HepG2 (cell line): ENCODE measurements at regions of chr2 and their contacts with region 1.

Region 1: DNA sequence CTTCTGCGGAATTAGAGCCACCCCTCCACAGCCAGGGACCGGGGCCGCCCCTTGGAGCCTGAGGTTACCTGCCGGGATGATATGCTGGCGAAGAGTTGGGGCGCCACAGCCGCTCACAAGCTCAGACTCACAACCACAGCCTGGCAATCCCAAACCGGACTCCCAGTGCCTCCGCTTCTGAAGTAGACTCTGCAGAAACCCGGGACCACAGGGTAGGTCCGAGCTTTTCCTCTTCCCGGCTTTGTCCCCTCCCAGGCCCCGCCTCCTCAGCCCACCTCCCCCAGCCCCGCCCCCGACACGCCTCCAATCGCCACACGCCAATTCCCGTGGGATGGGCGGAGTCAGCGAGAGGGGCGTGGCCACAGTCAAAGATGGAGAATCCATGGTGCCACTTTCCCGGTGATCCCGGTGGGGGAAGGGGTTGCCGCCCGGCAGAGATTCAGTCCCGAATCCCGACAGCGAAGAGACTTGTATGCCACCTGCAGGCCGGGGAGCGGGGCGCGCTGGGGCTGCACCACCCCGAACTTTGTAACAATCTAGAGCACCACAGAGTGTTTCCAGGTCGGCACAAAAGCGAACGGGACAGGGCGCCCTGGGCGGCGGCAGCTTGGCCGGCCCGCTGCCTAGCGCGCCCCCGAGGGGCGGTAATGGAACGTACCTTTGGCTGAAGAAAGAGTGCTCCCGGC is at the start of gene IDH1:
- DNase-seq: peak; percentile 94
- ATAC-seq: peak; percentile 81
- H3K4me3 ChIP-seq: peak within 1 kb of the TSS; percentile 85 to 100 (median 100)
- H3K27ac ChIP-seq: peak within 1 kb of the TSS; percentile 97
- H3K4me1 ChIP-seq: peaks cover 65% of the 10 kb centered on the region
- H3K27me3 ChIP-seq: no peaks in the 10 kb centered on the region; a peak in 2 of 5 replicates
- CTCF ChIP-seq: peak; percentile 84
- EP300 ChIP-seq: 0 out of 4 replicates have a peak, but pooled peaks of 1 of the 2 experiments have one; percentile 18
- POLR2A ChIP-seq: peak; percentile 86 to 99
- RAD21 ChIP-seq: peak; percentile 84
- total RNA-seq, gene IDH1: 1,077 and 1,654 TPM in 2 replicates

Region 2: GRCh38 chr2:207869784-207870778 is 384.9 kb before region 1 on chr2:
- CTCF ChIA-PET with region 1: no interaction called
- POLR2A ChIA-PET with region 1: no interaction called
- in situ Hi-C with region 1: no loop called
- intact Hi-C with region 1: no loop called
- DNase-seq: peak; percentile 100
- ATAC-seq: peak; percentile 95
- H3K4me3 ChIP-seq: peak overlapping the region; percentile 3 to 10 (median 3); a peak in 4 of 6 replicates
- H3K27ac ChIP-seq: peak overlapping the region; percentile 81
- H3K4me1 ChIP-seq: peaks cover 57% of the 10 kb centered on the region
- H3K27me3 ChIP-seq: no peaks in the 10 kb centered on the region
- CTCF ChIP-seq: no peak
- EP300 ChIP-seq: peak; percentile 97 to 99
- POLR2A ChIP-seq: peak in 1 of 2 experiments; percentile 57; a peak in 2 of 4 replicates
- RAD21 ChIP-seq: peak; percentile 36; the same call in 1 of the 2 replicates

Region 3: GRCh38 chr2:208101716-208102631 is 153.0 kb before region 1 on chr2:
- CTCF ChIA-PET with region 1: interaction called, 11 read pairs
- POLR2A ChIA-PET with region 1: interaction called, 9 read pairs
- in situ Hi-C with region 1: loop called (anchors 5 kb)
- intact Hi-C with region 1: loop called (anchors 1 kb)
- DNase-seq: peak; percentile 46
- ATAC-seq: peak; percentile 79
- H3K4me3 ChIP-seq: no peak overlapping the region
- H3K27ac ChIP-seq: no peak overlapping the region
- H3K4me1 ChIP-seq: peaks cover 12% of the 10 kb centered on the region
- H3K27me3 ChIP-seq: peaks cover 0 to 27% of the 10 kb centered on the region in 2 experiments; a peak in 3 of 5 replicates
- CTCF ChIP-seq: peak; percentile 69
- EP300 ChIP-seq: no peak
- POLR2A ChIP-seq: no peak
- RAD21 ChIP-seq: peak; percentile 63

Region 4: DNA sequence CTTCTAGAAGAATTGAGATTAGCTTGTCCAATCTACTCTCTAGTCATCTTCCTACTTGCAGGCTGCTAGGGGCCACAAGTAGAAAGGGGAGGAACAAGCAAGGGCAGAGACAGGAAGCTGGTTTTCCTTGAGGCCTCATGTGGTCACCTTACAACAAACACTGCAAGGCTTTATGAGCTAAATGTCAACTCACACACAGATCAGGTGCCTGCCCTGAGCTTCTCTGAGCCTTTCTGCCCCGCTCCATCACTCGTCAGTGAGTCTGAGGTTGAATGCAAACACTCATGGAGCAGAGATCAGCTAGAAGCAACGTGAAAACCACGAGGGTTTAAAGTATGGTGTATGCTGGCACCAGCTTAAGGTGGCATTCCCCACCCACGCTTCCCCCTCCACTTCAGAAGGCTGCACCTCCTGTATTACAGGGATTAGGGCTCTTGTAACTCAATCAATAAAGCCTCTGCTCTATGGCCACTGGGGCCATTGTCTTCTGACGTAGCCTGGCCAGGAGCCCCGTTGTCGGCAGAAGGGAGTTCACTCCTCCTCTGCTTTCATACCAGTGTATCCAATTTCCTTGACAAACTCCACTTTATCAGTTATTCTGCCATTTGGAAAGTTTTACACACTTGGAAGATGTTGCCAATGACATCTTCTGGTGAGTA is 120.0 kb before region 1 on chr2:
- CTCF ChIA-PET with region 1: no interaction called
- POLR2A ChIA-PET with region 1: interaction called, 11 read pairs
- in situ Hi-C with region 1: no loop called
- intact Hi-C with region 1: no loop called
- DNase-seq: peak; percentile 33
- ATAC-seq: peak; percentile 54
- H3K4me3 ChIP-seq: no peak overlapping the region
- H3K27ac ChIP-seq: peak overlapping the region; percentile 12
- H3K4me1 ChIP-seq: peaks cover 40% of the 10 kb centered on the region
- H3K27me3 ChIP-seq: no peaks in the 10 kb centered on the region
- CTCF ChIP-seq: no peak
- EP300 ChIP-seq: peak in 1 of 2 experiments; percentile 46; a peak in 1 of 4 replicates
- POLR2A ChIP-seq: no peak
- RAD21 ChIP-seq: no peak

Region 5: GRCh38 chr2:208240619-208241209 is 14.3 kb before region 1 on chr2:
- CTCF ChIA-PET with region 1: no interaction called
- POLR2A ChIA-PET with region 1: interaction called, 20 read pairs
- in situ Hi-C with region 1: no loop called
- intact Hi-C with region 1: no loop called
- DNase-seq: no peak
- ATAC-seq: peak; percentile 6; the same call in 1 of the 3 replicates
- H3K4me3 ChIP-seq: no peak overlapping the region
- H3K27ac ChIP-seq: no peak overlapping the region
- H3K4me1 ChIP-seq: peaks cover 20% of the 10 kb centered on the region
- H3K27me3 ChIP-seq: no peaks in the 10 kb centered on the region
- CTCF ChIP-seq: no peak
- EP300 ChIP-seq: no peak
- POLR2A ChIP-seq: no peak
- RAD21 ChIP-seq: no peak